BJ (cell line): ENCODE measurements at regions of chr15 and their contacts with region 1.

Region 1: DNA sequence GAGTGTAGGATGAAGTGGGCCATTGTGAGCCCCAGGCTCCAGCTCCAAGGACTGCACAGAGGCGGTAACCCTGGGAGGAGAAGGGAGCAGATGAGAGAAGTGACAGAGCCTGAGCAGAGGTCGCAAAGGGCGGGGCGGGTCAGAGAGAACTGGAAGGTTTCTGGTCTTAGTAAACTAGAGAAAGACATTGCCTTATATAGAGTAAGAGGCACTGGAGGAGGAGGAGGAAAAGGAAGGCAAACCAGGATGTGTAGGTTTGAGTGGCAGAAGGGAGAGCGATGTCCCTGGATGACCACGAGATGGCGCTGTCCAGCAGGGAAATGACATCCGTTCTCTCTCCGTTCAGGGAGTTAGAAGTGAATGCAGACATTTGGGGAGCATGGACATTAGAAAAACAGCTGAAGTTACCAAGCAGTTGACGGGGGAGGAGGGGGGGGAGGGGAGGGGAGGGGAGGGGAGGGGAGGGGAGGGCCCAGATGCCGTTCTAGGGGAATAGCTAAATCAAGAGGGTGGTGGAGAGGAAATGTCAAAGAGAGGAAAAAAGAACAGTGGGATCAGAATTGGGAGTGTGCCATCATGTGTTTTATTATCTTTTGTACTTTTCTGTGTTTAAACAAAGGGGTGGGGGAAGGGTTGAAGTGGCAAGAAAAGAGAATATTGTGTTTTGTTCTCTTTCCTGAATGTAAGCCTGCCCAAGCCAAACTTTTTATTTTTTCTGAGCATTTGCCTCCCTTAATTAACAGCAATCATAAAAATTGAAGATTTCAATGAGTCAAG is 48.8 kb downstream of the STARD5 start:
- DNase-seq: no peak
- H3K4me3 ChIP-seq: no peak overlapping the region
- H3K27me3 ChIP-seq: peaks cover 4% of the 10 kb centered on the region; the same call in 1 of the 2 replicates
- CTCF ChIP-seq: peak; percentile 84

Region 2: DNA sequence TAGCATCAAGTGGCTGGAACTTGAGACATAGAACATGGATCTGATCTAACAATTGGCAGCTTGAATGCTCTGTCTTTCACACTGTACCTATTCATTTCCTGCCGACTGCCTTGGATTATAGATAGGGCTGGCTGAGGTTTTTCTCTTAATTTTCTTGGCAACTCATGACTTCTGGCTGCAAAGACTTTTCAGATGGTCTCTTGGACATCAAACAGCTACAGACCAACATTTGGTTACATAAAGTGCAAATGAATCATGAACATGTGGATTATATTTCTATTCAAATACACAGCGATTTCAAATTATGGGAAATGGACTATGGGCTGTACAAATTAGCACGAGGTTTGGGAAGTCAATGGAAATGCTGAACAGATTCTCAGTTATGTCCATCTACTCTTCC is 104.6 kb before region 1 on chr15:
- CTCF ChIA-PET with region 1: no interaction called
- POLR2A ChIA-PET with region 1: no interaction called
- DNase-seq: no peak
- H3K4me3 ChIP-seq: no peak overlapping the region
- H3K27me3 ChIP-seq: peaks cover 2% of the 10 kb centered on the region
- CTCF ChIP-seq: no peak

Region 3: DNA sequence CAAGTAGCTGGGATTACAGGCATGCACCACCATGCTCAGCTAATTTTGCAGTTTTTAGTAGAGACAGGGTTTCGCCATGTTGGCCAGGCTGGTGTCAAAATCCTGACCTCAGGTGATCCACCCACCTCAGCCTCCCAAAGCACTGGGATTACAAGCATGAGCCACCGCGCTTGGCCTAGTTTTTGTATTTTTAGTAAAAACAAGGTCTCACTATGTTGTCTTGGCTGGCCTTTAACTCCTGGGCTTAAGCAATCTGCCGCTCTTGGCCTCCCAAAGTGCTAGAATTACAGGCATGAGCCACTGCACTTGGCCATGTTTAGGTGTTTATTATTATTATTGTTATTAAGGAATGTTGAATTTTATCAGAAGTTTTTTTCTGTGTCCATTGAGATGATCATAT is 63.7 kb before region 1 on chr15:
- CTCF ChIA-PET with region 1: no interaction called
- POLR2A ChIA-PET with region 1: no interaction called
- DNase-seq: no peak
- H3K4me3 ChIP-seq: no peak overlapping the region
- H3K27me3 ChIP-seq: 0 out of 2 replicates have a peak, but pooled peaks cover 1% of the 10 kb centered on the region
- CTCF ChIP-seq: no peak

Region 4: DNA sequence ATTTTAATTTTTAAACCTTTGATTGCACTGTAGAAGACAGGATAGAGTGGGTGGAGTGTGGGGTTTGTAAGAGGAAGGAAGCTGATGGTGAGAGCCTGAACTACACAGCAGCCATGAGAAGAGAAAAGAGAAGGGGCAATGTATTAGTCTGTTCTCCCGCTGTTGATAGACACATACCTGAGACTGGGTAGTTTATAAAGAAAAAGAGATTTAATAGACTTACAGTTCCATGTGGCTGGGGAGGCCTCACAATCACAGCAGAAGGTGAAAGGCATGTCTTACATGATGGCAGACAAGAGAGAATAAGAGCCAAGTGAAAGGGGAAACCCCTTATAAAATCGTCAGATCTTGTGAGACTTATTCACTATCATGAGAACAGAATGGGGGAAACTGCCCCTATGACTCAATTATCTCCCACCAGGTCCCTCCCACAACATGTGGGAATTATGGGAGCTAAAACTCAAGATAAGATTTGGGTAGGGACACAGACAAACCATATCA is 11.6 kb after region 1 on chr15:
- CTCF ChIA-PET with region 1: interaction called, 16 read pairs
- POLR2A ChIA-PET with region 1: no interaction called
- DNase-seq: no peak
- H3K4me3 ChIP-seq: no peak overlapping the region
- H3K27me3 ChIP-seq: no peaks in the 10 kb centered on the region; the same call in 1 of the 2 replicates
- CTCF ChIP-seq: no peak

Region 5: DNA sequence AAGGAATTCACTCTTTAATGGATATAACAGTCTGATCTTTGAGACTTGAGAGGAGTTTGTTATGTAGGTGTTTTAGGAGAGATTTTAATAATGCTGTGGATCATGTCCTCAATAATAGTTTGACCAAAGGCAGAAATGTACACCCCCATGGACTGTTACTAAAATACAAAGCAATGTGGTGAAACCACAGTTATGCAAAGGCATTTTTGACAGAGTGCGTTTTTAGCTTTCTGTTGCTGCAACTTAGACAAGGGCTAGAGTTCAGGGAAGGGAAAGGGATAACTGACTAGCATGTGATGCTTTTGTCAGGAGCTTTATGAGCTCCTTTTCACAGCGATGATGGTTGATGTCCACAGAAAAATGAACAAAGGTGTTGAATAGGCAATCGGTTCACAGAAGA is 52.4 kb after region 1 on chr15:
- CTCF ChIA-PET with region 1: interaction called, 14 read pairs
- POLR2A ChIA-PET with region 1: no interaction called
- DNase-seq: peak; percentile 80
- H3K4me3 ChIP-seq: no peak overlapping the region
- H3K27me3 ChIP-seq: peaks cover 1% of the 10 kb centered on the region; the same call in 1 of the 2 replicates
- CTCF ChIP-seq: no peak

Region 6: GRCh38 chr15:81342561-81342960 is 67.4 kb after region 1 on chr15:
- CTCF ChIA-PET with region 1: interaction called, 53 read pairs
- POLR2A ChIA-PET with region 1: no interaction called
- DNase-seq: no peak
- H3K4me3 ChIP-seq: no peak overlapping the region
- H3K27me3 ChIP-seq: no peaks in the 10 kb centered on the region
- CTCF ChIP-seq: no peak

Region 7: GRCh38 chr15:81394603-81395002 is 119.5 kb after region 1 on chr15:
- CTCF ChIA-PET with region 1: interaction called, 120 read pairs
- POLR2A ChIA-PET with region 1: no interaction called
- DNase-seq: no peak
- H3K4me3 ChIP-seq: no peak overlapping the region
- H3K27me3 ChIP-seq: 0 out of 2 replicates have a peak, but pooled peaks cover 1% of the 10 kb centered on the region
- CTCF ChIP-seq: no peak

Region 8: GRCh38 chr15:81410318-81410753 is 135.2 kb after region 1 on chr15:
- CTCF ChIA-PET with region 1: interaction called, 20 read pairs
- POLR2A ChIA-PET with region 1: no interaction called
- DNase-seq: peak; percentile 21
- H3K4me3 ChIP-seq: no peak overlapping the region
- H3K27me3 ChIP-seq: no peaks in the 10 kb centered on the region; the same call in 1 of the 2 replicates
- CTCF ChIP-seq: peak; percentile 37; the same call in 1 of the 2 replicates